ENCODE measurements at regions of chr1 and their contacts with region 1.

Region 1: GRCh38 chr1:29202584-29203340 is 21.1 kb upstream of the SRSF4 start:
- DNase-seq: peak; percentile 98

Region 2: GRCh38 chr1:28886731-28887418 is 315.9 kb before region 1 on chr1:
- intact Hi-C with region 1: loop called (anchors 5 kb)
- DNase-seq: peak; percentile 92